ENCODE measurements at regions of chr12 and their contacts with region 1.

Region 1: GRCh38 chr12:56630160-56630632 is at the start of gene BAZ2A:
- DNase-seq: peak; percentile 91

Region 2: DNA sequence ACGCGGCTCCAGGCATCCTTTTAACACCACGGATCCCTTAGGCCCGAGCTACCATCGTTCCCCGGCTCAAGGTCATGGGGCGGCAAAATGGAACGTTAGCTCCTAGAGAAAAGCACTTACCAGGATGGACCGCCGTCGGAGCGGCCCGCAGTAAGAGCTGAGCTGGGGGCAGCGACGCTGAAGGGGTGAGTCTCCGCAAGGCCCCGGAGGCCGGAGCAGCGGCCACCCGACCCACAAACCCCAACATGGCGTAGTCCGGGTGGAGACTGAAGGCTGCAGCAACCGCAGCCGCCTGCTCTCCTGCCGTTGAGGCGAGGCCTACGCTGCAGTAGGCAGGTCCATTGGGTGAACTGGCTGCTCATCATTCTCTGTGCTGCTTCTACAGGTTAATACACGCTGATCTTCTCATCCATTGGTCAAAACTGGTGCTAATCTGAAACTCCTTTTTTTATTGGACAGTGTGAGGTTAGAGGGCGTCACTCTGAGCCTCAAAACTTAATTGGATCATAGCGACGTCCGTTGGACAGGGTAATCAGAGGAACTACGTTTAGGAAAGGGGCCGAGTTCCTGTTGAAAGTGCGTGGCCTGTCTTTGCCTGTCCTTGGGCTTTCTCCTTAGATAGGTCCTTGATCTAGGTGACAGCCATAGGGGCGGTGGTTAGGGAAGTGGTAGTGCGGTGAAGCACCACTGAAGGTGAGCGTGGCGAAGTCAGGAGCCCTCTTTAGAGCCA is 15.7 kb after region 1 on chr12 and contains the start of gene ATP5F1B:
- CTCF ChIA-PET with region 1: no interaction called
- POLR2A ChIA-PET with region 1: interaction called, 34 read pairs
- DNase-seq: peak; percentile 96